WTC11 (cell line): ENCODE measurements at regions of chr2 and their contacts with region 1.

Region 1: DNA sequence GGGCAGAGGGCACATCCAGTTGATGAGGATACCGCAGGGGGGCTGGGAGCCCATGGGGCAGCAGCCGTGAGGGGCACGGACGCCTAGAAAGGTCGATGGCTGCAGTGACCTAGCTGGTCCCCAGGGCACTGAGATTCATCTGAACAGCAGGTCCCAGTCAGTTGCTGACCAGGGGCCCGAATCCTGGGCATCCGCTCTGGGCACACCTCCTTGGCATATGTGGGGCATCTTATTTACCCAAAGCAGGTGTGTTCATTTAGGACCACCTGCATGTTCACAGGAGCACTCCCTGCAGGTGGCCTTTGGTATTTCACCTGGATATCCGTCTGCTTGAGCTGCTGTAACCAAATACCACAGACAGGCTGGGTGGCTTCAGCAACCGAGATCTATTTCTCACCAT is 72.0 kb upstream of the ODC1 start:
- DNase-seq: peak; percentile 74
- ATAC-seq: peak; percentile 85
- H3K4me3 Mint-ChIP-seq: no peak overlapping the region
- H3K27ac Mint-ChIP-seq: no peak overlapping the region
- H3K4me1 Mint-ChIP-seq: peaks cover 9% of the 10 kb centered on the region; the same call in 1 of the 2 replicates
- H3K27me3 Mint-ChIP-seq: peaks cover 7% of the 10 kb centered on the region
- CTCF ChIP-seq: peak; percentile 53

Region 2: DNA sequence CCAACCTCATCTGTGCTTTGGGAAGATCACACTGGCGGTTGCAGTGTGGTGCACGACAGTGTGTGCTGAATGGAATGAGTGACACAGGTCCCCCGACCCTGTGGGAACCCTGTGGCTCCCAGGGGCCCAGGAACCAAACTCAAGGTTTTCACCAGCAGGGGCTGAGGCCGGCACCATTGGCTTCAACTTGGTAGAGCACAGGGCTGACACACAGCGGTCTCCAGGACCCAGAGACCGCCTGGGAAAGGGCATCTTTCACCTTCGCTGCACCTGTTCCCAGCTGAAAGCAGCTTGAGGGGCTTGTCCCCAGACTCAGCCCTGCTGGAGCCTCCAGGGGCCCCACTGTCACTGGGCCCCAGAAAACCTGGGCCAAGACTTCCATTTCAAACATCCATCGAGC is 13.0 kb before region 1 on chr2:
- CTCF ChIA-PET with region 1: interaction called, 10 read pairs
- POLR2A ChIA-PET with region 1: no interaction called
- DNase-seq: no peak
- ATAC-seq: no peak; the same call in 1 of the 2 replicates
- H3K4me3 Mint-ChIP-seq: no peak overlapping the region
- H3K27ac Mint-ChIP-seq: no peak overlapping the region
- H3K4me1 Mint-ChIP-seq: no peaks in the 10 kb centered on the region
- H3K27me3 Mint-ChIP-seq: peaks cover 3% of the 10 kb centered on the region; the same call in 1 of the 2 replicates
- CTCF ChIP-seq: no peak

Region 3: DNA sequence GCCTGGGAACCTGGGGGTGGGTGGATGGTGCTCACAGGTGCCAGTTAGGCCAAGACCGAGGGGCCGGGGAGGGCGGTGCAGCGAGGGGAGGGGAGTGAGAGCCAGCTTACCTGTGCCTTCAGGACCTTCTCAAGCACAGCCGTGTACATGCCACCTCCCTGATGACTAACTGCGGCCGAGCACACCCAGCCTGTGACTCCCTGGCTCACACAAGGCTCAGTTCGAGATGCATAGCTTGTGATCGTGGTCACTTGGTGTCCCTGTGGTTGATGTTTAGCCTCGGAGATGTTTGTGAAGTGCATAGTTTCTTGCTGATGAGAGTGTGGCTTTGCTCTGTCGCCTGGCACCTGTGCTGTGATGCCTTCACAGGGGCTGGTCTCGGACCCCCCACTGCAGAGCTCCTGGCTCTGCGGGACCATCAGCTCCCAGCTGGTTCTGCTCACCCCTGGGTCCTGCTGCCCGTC is 12.5 kb after region 1 on chr2:
- CTCF ChIA-PET with region 1: interaction called, 11 read pairs
- POLR2A ChIA-PET with region 1: no interaction called
- DNase-seq: no peak
- ATAC-seq: no peak
- H3K4me3 Mint-ChIP-seq: no peak overlapping the region
- H3K27ac Mint-ChIP-seq: no peak overlapping the region
- H3K4me1 Mint-ChIP-seq: no peaks in the 10 kb centered on the region
- H3K27me3 Mint-ChIP-seq: no peaks in the 10 kb centered on the region
- CTCF ChIP-seq: no peak